Transverse colon (tissue), 4 donors: ENCODE measurements at regions of chr12 and their contacts with region 1.

Region 1: DNA sequence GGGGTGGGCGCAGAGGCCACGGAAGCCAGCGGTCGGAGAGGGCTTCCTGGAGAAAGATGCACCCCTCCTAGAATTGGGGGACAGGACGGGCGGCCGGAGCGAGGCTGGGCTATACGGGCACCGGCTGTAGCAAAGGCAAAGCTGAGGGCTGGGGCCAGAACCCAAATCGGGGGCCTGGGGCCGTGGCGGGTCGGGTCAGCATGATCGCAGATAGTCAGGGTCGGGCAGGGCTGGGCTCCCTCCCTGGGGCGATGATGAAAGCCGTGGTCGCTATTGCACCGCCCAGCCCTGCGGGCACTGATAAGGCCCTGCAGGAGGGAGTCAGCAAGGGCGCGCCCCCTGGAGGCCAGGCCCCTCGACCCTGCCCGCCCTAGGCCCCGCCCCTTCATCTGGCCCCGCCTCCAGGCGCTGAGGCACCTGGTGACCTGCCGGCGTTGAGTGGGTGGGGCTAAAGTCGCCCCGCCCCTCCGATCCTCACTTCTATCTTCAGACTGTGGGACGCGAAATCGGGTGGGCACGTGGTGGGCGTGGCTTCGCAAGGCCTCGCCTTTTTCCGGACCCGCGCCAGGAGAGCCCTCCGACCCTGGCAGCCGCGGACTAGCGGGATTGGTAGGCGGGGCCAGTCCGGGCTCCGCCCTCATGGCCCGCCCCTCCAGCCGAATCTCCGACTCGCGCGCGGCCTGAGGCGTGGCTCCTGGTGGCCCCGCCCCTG is 418 bp upstream of the SH2B3 start:
- DNase-seq: peak; percentile 98
- H3K4me3 ChIP-seq: peak overlapping the region; percentile 90 to 97 (median 93)
- H3K27ac ChIP-seq: peak overlapping the region; percentile 88 to 93 (median 90)
- H3K4me1 ChIP-seq: peaks cover 30 to 68% (median 44%) of the 10 kb centered on the region in 4 donors
- H3K27me3 ChIP-seq: no peaks in the 10 kb centered on the region
- CTCF ChIP-seq: peak; percentile 48 to 75 (median 51)
- EP300 ChIP-seq: no peak
- POLR2A ChIP-seq: peak; percentile 55

Region 2: GRCh38 chr12:111182382-111182781 is 222.9 kb before region 1 on chr12:
- in situ Hi-C with region 1: no loop called
- intact Hi-C with region 1: no loop called
- DNase-seq: no peak
- H3K4me3 ChIP-seq: no peak overlapping the region
- H3K27ac ChIP-seq: no peak overlapping the region
- H3K4me1 ChIP-seq: peaks cover 0 to 17% (median 2%) of the 10 kb centered on the region in 4 donors
- H3K27me3 ChIP-seq: peaks cover 15% of the 10 kb centered on the region
- CTCF ChIP-seq: no peak
- EP300 ChIP-seq: no peak
- POLR2A ChIP-seq: no peak

Region 3: DNA sequence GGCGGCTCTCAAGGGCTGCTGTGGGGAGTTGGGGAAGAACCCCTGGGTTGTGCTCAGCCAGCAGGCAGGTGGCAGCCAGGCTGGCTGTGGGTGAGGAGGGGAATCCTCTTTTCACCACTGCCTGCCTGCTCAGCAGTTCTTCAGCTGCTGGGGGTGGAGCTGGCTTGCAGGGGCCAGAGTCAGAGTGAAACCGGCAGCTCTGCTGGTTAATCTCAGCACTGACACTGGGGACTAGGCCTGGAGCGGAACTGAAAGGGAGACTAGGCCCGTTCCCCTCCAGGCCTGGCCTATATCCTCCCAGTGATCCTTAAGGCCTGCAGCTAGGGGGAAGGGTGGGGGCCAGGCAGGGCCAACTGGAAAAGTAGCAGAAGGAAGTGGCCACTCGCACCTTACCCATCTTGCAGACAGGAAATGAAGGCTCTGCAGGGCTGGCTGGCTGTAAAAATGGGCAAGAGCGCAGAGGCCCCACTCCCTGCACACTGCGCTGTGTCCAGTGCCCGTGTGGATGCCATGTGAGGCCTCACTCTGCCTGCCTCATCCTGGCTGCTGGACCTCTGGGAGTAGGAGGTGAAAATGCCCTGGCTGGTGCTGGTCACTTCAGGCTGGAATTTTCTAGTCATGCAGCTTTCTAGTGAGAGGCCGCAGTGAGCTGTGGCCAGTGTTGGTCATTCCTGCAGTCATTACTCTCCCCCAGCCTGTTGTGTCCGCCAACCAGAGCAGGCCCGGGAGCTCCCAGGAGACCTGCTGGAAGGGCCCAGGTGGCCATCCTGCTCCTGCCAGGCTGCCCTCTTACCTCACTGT is 39.8 kb after region 1 on chr12:
- in situ Hi-C with region 1: no loop called
- intact Hi-C with region 1: loop called (anchors 5 kb)
- DNase-seq: peak; percentile 80
- H3K4me3 ChIP-seq: no peak overlapping the region
- H3K27ac ChIP-seq: peak overlapping the region; percentile 66 to 77 (median 72)
- H3K4me1 ChIP-seq: peaks cover 43 to 73% (median 54%) of the 10 kb centered on the region in 4 donors
- H3K27me3 ChIP-seq: no peaks in the 10 kb centered on the region
- CTCF ChIP-seq: peak in 1 of 5 experiments; percentile 18
- EP300 ChIP-seq: no peak
- POLR2A ChIP-seq: no peak

Region 4: DNA sequence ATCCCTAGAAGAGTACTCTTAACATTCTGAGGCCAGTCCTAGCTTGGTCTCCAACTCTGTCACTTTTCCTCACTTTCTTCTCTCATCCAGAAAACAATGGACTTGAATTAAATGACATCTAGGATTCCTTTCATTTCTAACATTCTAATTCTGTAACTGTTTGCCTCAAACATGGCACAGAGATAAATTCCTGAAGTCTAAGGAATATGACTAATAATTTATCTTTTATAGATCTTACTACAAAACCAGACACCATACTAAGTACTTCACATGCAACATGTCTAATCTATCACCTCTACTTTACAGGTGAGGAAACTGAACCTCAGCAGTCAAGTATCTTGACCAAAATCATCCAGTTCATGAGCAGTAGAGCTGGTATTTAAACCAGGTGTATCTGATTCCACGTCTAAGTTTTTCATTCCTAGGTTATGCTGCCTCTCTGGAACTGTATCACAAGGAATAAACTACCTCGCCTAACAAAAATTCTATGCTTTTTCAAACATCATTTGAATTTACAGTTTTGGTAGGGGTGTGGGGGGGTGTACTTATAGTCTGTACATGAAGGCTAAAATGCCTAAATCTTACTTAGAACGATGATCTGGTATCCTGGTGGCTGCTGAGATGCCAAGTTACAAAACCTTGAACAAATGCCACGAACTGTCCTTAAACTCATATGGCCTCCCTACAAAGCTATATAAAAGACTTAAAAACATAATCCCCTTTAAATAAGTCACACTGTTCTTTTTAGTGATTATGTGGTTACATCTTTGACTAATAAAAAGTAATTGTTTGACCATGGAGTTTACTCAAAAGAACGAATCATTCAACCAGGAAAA is 152.2 kb after region 1 on chr12:
- in situ Hi-C with region 1: no loop called
- intact Hi-C with region 1: no loop called
- DNase-seq: no peak
- H3K4me3 ChIP-seq: no peak overlapping the region
- H3K27ac ChIP-seq: no peak overlapping the region
- H3K4me1 ChIP-seq: peaks cover 0 to 50% (median 6%) of the 10 kb centered on the region in 4 donors
- H3K27me3 ChIP-seq: no peaks in the 10 kb centered on the region
- CTCF ChIP-seq: no peak
- EP300 ChIP-seq: no peak
- POLR2A ChIP-seq: no peak